CD8-positive, alpha-beta T cell (primary cell): ENCODE measurements at regions of chr12 and their contacts with region 1.

Region 1: DNA sequence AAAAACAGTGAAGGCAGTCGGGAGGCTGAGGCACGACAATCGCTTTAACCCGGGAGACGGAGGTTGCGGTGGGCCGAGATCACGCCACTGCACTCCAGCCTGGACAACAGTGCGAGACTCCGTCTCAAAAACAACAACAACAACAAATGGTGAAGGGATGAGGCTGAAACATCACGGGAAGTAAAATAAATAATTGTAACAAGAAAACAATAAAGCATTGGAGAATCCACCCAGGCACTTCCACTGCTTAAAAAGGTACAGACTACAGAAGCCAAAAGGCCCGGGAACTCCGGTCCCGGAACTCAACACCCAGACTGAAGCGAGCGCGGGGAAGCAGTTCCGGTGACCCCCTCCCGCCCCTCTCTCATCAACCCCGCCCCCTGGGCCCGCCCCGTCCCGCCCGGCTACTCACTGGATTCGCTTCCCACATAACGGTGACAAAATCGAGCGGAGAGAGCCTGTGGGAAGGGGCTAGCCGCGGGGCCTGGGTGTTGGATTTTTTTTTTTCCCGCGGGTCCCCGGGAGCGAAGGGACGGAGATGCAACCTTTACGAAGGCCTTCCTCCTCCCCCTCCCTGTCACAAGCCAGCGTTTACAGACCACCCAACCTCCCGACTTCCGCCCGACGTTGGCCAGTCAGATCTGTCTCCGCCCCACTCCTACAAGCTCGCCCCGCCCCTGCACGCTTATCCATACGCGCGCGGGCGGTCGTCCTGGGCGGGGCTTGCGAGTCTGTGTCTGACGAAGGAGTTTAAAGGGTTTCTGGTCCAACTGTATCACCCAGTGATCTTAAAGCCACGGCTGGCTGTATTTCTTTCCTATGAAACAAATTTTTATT is at the start of gene PARP11:
- DNase-seq: peak; percentile 95 to 99 (median 98)
- ATAC-seq: peak; percentile 96
- H3K4me3 ChIP-seq: peak within 1 kb of the TSS; percentile 64 to 80
- H3K4me3 Mint-ChIP-seq: peak within 1 kb of the TSS; percentile 97
- H3K27ac ChIP-seq: peak within 1 kb of the TSS; percentile 88 to 97
- H3K27ac Mint-ChIP-seq: peak within 1 kb of the TSS; percentile 99
- H3K4me1 ChIP-seq: peaks cover 45% of the 10 kb centered on the region
- H3K4me1 Mint-ChIP-seq: peaks cover 47% of the 10 kb centered on the region
- H3K27me3 ChIP-seq: no peaks in the 10 kb centered on the region
- H3K27me3 Mint-ChIP-seq: no peaks in the 10 kb centered on the region
- CTCF ChIP-seq: no peak
- total RNA-seq, gene PARP11: 11.5 to 11.8 TPM

Region 2: DNA sequence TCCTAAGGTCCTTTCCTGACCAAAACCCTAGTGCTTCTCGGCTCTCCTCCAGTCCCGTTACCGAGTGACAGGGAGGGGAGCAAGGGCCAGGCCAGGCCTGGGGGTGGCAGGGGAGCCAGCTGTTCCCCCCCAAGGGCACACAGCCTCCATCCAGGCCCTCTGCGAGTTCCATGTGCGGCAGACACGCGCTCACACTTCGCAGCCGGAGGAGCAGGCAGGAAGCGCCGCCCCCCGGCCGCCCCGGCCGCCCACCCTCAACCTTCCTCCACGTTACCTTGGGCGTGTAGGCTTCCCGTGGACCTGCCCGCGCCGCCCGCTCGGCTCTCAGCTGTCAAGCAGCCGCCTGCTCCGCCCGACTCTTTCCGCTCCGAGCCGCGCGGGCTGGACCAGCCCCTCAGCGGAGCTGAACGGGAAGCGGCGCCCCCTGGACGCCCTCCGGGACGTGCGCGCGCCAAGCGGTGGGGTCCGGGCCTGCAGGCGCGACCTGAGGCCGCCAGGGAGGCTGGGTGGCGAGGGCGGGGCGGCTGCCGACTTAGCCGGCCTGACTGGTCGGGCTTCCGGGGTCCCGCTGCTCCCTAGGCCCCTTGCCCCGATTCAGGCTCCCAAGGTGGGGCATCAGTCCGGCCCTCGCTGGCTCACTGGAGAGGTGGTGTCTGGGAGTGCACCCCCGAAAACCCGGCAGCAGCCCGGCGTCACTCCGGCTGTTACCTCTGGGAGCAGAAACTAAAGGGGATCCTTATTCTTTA is 120.1 kb before region 1 on chr12 and contains the start of gene CRACR2A:
- CTCF ChIA-PET with region 1: no interaction called
- POLR2A ChIA-PET with region 1: interaction called, 5 read pairs
- intact Hi-C with region 1: loop called (anchors 1 to 2 kb)
- DNase-seq: peak; percentile 71 to 94 (median 85)
- ATAC-seq: peak; percentile 81
- H3K4me3 ChIP-seq: peak within 1 kb of the TSS; percentile 63 to 81
- H3K4me3 Mint-ChIP-seq: peak within 1 kb of the TSS; percentile 84
- H3K27ac ChIP-seq: peak within 1 kb of the TSS; percentile 94 to 95
- H3K27ac Mint-ChIP-seq: peak within 1 kb of the TSS; percentile 95
- H3K4me1 ChIP-seq: peaks cover 45% of the 10 kb centered on the region
- H3K4me1 Mint-ChIP-seq: peaks cover 62% of the 10 kb centered on the region
- H3K27me3 ChIP-seq: no peaks in the 10 kb centered on the region
- H3K27me3 Mint-ChIP-seq: no peaks in the 10 kb centered on the region
- CTCF ChIP-seq: peak; percentile 87
- total RNA-seq, gene CRACR2A: 17.9 TPM

Region 3: DNA sequence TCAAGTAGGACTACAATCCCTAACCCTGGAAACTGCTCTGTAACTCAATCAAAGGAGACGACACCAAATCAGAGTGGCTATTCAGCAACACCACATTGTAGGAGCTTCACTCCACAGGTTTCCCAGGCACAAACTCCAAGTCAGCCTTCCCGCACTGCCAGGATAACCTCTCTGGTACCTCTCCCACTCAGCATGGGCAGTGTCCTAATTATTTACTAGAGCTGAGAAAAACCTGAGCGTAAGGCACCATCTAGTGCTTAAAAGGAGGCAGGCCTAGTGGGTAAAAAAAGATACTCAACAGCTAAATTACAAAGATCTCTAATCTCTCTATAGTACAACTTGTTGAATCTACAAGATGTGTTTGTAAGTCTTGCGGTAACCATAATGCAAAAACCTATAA is 36.0 kb before region 1 on chr12:
- CTCF ChIA-PET with region 1: no interaction called
- POLR2A ChIA-PET with region 1: interaction called, 3 read pairs
- intact Hi-C with region 1: loop called in 1 of 2 experiments (anchors 5 kb)
- DNase-seq: no peak
- ATAC-seq: no peak
- H3K4me3 ChIP-seq: no peak overlapping the region
- H3K4me3 Mint-ChIP-seq: no peak overlapping the region
- H3K27ac ChIP-seq: no peak overlapping the region
- H3K27ac Mint-ChIP-seq: no peak overlapping the region
- H3K4me1 ChIP-seq: no peaks in the 10 kb centered on the region
- H3K4me1 Mint-ChIP-seq: peaks cover 61% of the 10 kb centered on the region
- H3K27me3 ChIP-seq: no peaks in the 10 kb centered on the region
- H3K27me3 Mint-ChIP-seq: no peaks in the 10 kb centered on the region
- CTCF ChIP-seq: no peak

Region 4: GRCh38 chr12:3905664-3906063 is 32.6 kb after region 1 on chr12:
- CTCF ChIA-PET with region 1: no interaction called
- POLR2A ChIA-PET with region 1: no interaction called
- intact Hi-C with region 1: no loop called
- DNase-seq: no peak
- ATAC-seq: no peak
- H3K4me3 ChIP-seq: peak overlapping the region; percentile 27 to 34
- H3K4me3 Mint-ChIP-seq: peak overlapping the region; percentile 82
- H3K27ac ChIP-seq: peak overlapping the region in 1 of 2 experiments; percentile 40
- H3K27ac Mint-ChIP-seq: peak overlapping the region; percentile 90
- H3K4me1 ChIP-seq: peaks cover 17% of the 10 kb centered on the region
- H3K4me1 Mint-ChIP-seq: peaks cover 33% of the 10 kb centered on the region
- H3K27me3 ChIP-seq: no peaks in the 10 kb centered on the region
- H3K27me3 Mint-ChIP-seq: no peaks in the 10 kb centered on the region
- CTCF ChIP-seq: no peak

Region 5: DNA sequence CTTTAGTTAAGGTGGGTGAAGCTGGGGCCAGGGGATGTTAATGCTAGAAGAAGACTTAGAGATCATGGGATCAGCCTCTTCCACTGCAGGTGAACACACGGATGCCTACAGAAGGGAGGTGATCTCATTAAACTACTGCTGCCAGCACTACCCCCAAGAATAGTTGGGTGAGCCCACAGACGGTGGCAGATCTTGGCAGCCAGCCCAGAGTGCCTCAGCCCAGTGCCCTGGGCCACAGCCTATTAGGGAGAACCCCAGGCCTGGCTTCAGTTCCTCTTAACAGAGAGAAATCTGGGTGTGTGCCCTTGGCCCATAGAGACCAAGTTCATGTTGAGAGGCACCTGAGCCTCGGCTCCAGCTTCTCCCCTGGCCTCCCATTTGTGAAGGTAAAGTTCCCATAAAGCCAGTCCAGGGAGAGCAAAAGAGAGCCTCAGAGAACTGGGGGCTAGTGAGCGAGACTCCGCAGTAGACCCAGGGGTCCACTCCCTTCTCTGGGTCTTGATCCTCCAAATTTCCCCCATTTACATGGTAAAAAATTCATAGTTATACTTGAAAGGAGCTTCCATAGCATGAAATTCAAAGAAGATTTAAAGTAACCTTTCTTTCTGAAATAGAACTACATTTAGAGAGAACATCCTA is 275.5 kb after region 1 on chr12:
- CTCF ChIA-PET with region 1: no interaction called
- POLR2A ChIA-PET with region 1: no interaction called
- intact Hi-C with region 1: loop called (anchors 2 to 5 kb)
- DNase-seq: peak; percentile 29 to 75 (median 51)
- ATAC-seq: peak; percentile 65
- H3K4me3 ChIP-seq: no peak overlapping the region
- H3K4me3 Mint-ChIP-seq: no peak overlapping the region
- H3K27ac ChIP-seq: no peak overlapping the region
- H3K27ac Mint-ChIP-seq: no peak overlapping the region
- H3K4me1 ChIP-seq: peaks cover 20% of the 10 kb centered on the region
- H3K4me1 Mint-ChIP-seq: peaks cover 36% of the 10 kb centered on the region
- H3K27me3 ChIP-seq: no peaks in the 10 kb centered on the region
- H3K27me3 Mint-ChIP-seq: no peaks in the 10 kb centered on the region
- CTCF ChIP-seq: no peak

Region 6: DNA sequence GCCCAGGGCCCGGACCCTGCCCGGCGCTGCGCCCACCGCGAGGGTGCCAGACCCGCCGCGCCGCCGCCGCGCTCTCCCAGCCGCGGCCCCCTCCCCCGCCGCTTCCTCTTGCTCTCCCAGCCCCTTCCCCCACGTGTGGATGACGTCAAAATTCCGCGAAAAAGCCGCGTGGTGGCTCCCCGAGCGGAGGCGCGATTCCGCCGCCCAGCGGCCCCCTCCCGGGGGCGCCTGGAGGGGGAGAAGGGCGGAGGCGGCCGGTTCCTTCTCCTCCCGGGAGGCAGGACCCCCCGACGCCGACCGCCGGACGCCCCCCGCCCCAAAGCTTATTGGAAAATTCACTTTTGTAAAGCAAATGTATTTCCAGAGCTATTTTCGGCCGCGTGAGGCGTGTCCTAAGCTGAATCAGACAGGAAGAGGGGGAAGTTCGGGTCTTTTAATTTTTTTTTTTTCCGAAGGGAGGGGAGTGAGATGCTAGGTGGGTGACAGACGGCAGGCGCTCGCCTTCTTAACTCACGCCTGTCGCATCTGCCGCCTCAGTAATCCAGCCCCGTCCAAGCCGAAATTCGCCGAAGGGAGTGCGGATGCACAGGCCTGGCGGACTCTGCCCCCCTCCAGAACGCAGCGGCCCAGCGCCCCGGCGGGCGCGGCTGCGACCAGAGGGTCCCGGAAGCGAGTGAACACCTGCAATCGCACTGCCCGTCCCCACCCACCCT is 396.4 kb after region 1 on chr12:
- CTCF ChIA-PET with region 1: no interaction called
- POLR2A ChIA-PET with region 1: interaction called, 6 read pairs
- intact Hi-C with region 1: loop called (anchors 1 kb)
- DNase-seq: peak; percentile 87 to 97 (median 93)
- ATAC-seq: peak; percentile 42
- H3K4me3 ChIP-seq: peak overlapping the region; percentile 70 to 91
- H3K4me3 Mint-ChIP-seq: peak overlapping the region; percentile 100
- H3K27ac ChIP-seq: peak overlapping the region; percentile 93 to 94
- H3K27ac Mint-ChIP-seq: peak overlapping the region; percentile 95
- H3K4me1 ChIP-seq: peaks cover 20% of the 10 kb centered on the region
- H3K4me1 Mint-ChIP-seq: peaks cover 21% of the 10 kb centered on the region
- H3K27me3 ChIP-seq: no peaks in the 10 kb centered on the region
- H3K27me3 Mint-ChIP-seq: no peaks in the 10 kb centered on the region
- CTCF ChIP-seq: no peak

Region 7: DNA sequence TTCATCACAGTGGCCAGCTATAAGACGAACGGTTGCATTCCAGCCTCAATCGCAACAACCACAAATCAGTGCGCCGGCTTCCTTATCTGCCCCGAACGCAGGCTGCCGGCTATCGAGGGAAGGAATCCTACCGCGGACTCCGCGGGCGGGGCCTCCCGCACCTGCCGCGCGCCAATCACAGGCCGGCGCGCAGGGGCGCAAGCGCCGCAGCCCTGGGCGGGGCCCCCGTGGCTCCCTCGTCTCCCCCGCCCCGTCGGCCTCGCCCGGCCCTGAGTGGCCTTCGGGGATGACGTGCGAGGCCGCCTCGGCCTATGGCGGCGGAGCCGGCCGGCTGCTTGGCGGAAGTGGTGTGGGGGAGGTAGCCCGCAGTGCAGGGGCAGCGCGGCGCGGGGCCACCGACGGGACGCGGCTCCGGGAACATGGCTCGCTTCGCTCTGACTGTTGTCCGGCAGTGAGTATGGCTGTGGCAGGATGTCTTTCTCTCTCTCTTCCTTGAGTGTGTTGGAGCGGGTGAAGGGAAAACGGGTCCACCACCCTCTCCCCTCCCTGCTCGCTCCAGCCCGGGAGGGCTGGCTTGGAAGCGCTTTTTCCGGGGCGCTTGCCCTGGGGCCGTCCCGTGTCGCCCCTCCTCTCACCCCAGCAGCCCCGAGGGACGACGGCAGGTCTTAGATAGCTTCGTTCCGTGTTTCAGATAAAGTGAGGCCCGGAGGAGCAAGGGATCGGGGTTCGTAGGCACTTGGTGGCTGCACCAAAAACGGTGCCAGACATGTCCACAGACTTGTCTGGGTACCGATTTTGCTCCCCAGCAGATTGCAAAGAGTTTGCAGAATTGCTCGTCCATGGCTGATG is 448.1 kb after region 1 on chr12 and contains the start of gene TIGAR:
- CTCF ChIA-PET with region 1: no interaction called
- POLR2A ChIA-PET with region 1: no interaction called
- intact Hi-C with region 1: loop called (anchors 1 to 5 kb)
- DNase-seq: peak; percentile 79 to 97 (median 90)
- ATAC-seq: peak; percentile 96
- H3K4me3 ChIP-seq: peak within 1 kb of the TSS; percentile 86 to 89
- H3K4me3 Mint-ChIP-seq: peak within 1 kb of the TSS; percentile 96
- H3K27ac ChIP-seq: peak within 1 kb of the TSS; percentile 81 to 83
- H3K27ac Mint-ChIP-seq: peak within 1 kb of the TSS; percentile 95
- H3K4me1 ChIP-seq: peaks cover 25% of the 10 kb centered on the region
- H3K4me1 Mint-ChIP-seq: peaks cover 40% of the 10 kb centered on the region
- H3K27me3 ChIP-seq: no peaks in the 10 kb centered on the region
- H3K27me3 Mint-ChIP-seq: no peaks in the 10 kb centered on the region
- CTCF ChIP-seq: no peak
- total RNA-seq, gene TIGAR: 14.0 to 15.8 TPM

Region 8: DNA sequence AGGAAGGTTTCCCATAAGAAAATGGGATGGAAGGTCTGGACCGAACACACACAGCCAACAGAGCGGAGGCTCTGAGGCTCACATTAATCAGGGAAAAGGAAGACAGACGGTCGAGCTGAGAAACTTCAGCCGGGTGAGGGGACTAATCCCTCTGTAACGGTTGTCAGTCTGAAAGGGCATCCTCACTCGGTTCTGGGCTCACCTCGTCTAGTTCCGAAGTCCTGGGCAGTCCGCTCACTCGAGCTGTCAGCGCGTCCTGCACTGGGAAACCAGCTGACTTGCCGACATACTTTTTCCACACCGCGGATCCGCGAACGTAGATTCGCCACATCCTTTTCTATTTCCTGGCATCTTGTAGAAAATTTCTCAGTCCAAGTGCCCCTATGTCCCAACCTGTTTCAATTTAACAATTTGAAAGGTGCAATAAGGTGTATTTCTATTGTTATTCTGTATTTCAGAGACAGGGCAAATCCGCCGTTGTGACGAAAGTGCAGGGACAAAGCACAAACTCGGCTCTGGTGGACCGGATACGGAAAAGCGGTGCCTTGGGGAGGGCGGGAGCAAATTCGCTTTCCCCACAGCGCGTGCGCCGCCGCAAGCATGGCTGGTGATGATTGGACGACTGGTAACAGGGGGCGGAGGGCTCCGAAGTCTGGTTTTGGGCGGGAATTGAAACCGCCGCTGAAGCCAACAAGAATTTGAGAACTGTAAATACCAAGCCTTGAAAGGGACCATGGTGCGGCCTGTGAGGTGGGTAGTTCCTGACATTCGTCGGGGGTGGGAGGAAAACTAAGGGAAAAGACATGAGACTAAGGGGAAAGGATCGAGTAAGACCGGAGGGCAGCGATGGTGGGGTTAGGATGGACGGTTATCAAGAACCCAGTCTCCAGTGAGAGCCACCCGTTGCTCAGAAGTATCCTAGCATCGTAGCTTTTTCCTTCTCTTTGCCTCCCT is 665.5 kb after region 1 on chr12 and contains the start of gene RAD51AP1:
- CTCF ChIA-PET with region 1: no interaction called
- POLR2A ChIA-PET with region 1: interaction called, 3 read pairs
- intact Hi-C with region 1: loop called (anchors 1 to 5 kb)
- DNase-seq: peak; percentile 89 to 98 (median 94)
- ATAC-seq: peak; percentile 99
- H3K4me3 ChIP-seq: peak within 1 kb of the TSS; percentile 68 to 97
- H3K4me3 Mint-ChIP-seq: peak within 1 kb of the TSS; percentile 98
- H3K27ac ChIP-seq: peak within 1 kb of the TSS; percentile 85 to 97
- H3K27ac Mint-ChIP-seq: peak within 1 kb of the TSS; percentile 98
- H3K4me1 ChIP-seq: peaks cover 7% of the 10 kb centered on the region
- H3K4me1 Mint-ChIP-seq: peaks cover 26% of the 10 kb centered on the region
- H3K27me3 ChIP-seq: no peaks in the 10 kb centered on the region
- H3K27me3 Mint-ChIP-seq: no peaks in the 10 kb centered on the region
- CTCF ChIP-seq: no peak
- total RNA-seq, gene RAD51AP1: 0.87 to 1.6 TPM